ENCODE measurements at regions of chr16 and their contacts with region 1.

Region 1: DNA sequence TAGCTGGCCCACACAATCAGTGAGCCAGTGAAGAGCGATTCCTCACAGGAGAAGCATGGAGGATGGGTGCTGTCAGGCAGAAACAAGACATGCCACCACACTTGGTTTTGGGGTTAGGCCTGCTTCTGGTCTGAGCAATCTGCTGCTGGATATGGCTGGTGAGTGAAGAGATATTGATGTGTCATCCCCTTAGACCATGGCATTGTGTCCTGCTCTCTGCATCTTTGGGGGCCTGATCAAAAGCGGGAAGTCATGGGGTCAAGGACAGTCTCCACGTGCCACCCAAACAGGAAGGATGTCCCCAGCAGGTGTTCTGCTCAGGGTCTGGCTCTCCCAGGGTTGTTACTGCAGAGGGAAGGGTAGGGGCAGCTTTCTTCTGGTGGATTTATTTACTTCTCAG is 140.7 kb downstream of the PRKCB start:
- DNase-seq: no peak
- ATAC-seq: no peak
- H3K4me3 ChIP-seq: no peak overlapping the region
- H3K4me3 Mint-ChIP-seq: no peak overlapping the region
- H3K27ac ChIP-seq: no peak overlapping the region
- H3K27ac Mint-ChIP-seq: peak overlapping the region; percentile 24
- H3K4me1 ChIP-seq: peaks cover 9% of the 10 kb centered on the region
- H3K4me1 Mint-ChIP-seq: peaks cover 44% of the 10 kb centered on the region
- H3K27me3 ChIP-seq: no peaks in the 10 kb centered on the region
- H3K27me3 Mint-ChIP-seq: no peaks in the 10 kb centered on the region
- CTCF ChIP-seq: no peak

Region 2: GRCh38 chr16:23924128-23924527 is 52.4 kb before region 1 on chr16:
- CTCF ChIA-PET with region 1: no interaction called
- POLR2A ChIA-PET with region 1: no interaction called
- intact Hi-C with region 1: loop called in 1 of 2 experiments (anchors 5 kb)
- DNase-seq: peak in 2 of 14 experiments; percentile 42 to 57
- ATAC-seq: no peak
- H3K4me3 ChIP-seq: no peak overlapping the region
- H3K4me3 Mint-ChIP-seq: no peak overlapping the region
- H3K27ac ChIP-seq: no peak overlapping the region
- H3K27ac Mint-ChIP-seq: no peak overlapping the region
- H3K4me1 ChIP-seq: peaks cover 13% of the 10 kb centered on the region
- H3K4me1 Mint-ChIP-seq: peaks cover 68% of the 10 kb centered on the region
- H3K27me3 ChIP-seq: no peaks in the 10 kb centered on the region
- H3K27me3 Mint-ChIP-seq: no peaks in the 10 kb centered on the region
- CTCF ChIP-seq: no peak